SK-N-SH (cell line): ENCODE measurements at regions of chr18 and their contacts with region 1.

Region 1: DNA sequence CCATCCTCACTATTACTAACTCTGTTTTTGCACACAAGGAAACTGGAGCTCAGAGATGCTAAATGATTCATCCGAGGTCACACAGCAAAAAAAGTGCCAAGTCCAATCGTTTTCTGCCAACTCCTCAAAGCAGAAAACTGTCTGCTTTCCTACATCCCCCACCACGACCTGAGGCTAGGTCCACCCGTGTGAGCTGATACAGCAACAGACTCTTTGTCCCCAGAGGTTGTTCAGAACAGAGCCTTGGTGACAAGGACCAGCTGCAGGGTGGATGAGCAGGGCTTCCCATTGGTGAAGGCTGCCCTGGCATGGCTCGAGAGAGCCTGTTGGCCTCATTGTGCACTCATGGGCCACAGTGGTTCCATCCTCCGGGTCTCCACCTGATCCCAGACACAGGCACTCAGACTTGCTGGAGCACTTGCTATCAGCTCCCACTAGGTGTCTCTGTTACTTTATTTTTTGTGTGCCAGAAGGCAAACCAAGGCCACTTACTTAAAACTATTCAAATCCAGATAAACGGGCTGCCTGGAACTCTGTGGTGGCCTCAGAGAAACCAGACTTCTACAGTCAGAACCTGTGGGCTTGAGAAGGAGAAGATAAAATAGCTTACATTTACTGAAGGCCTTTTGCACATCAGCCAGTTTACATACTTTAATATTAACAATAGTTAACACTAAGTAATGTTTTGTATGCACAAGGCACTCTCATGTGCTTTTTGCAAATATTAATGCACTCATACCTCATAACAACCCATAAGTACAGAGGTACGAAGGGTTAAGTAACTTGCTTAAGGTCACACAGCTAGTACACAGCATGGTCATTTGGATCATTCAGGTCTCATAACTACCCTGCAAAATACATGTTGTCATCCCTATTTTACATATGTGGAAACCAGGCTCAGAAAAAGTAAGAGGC is 62.9 kb upstream of the CTIF start:
- DNase-seq: peak; percentile 73
- H3K4me3 ChIP-seq: no peak overlapping the region
- H3K27ac ChIP-seq: no peak overlapping the region
- H3K4me1 ChIP-seq: peaks cover 0 to 3% of the 10 kb centered on the region in 2 experiments; a peak in 1 of 4 replicates
- H3K27me3 ChIP-seq: no peaks in the 10 kb centered on the region
- CTCF ChIP-seq: peak; percentile 89
- EP300 ChIP-seq: no peak
- RAD21 ChIP-seq: peak; percentile 98

Region 2: GRCh38 chr18:48460929-48461583 is 14.8 kb before region 1 on chr18:
- CTCF ChIA-PET with region 1: interaction called, 13 read pairs
- POLR2A ChIA-PET with region 1: no interaction called
- DNase-seq: no peak
- H3K4me3 ChIP-seq: no peak overlapping the region
- H3K27ac ChIP-seq: no peak overlapping the region
- H3K4me1 ChIP-seq: peaks cover 0 to 10% of the 10 kb centered on the region in 2 experiments; a peak in 2 of 4 replicates
- H3K27me3 ChIP-seq: no peaks in the 10 kb centered on the region
- CTCF ChIP-seq: no peak
- EP300 ChIP-seq: no peak
- RAD21 ChIP-seq: no peak

Region 3: GRCh38 chr18:48493434-48494230 is 17.7 kb after region 1 on chr18:
- CTCF ChIA-PET with region 1: interaction called, 28 read pairs
- POLR2A ChIA-PET with region 1: no interaction called
- DNase-seq: no peak
- H3K4me3 ChIP-seq: no peak overlapping the region; a peak in 1 of 4 replicates
- H3K27ac ChIP-seq: no peak overlapping the region
- H3K4me1 ChIP-seq: no peaks in the 10 kb centered on the region; a peak in 1 of 4 replicates
- H3K27me3 ChIP-seq: no peaks in the 10 kb centered on the region
- CTCF ChIP-seq: no peak
- EP300 ChIP-seq: no peak
- RAD21 ChIP-seq: no peak

Region 4: GRCh38 chr18:48675352-48675761 is 199.5 kb after region 1 on chr18:
- CTCF ChIA-PET with region 1: interaction called, 174 read pairs
- POLR2A ChIA-PET with region 1: no interaction called
- DNase-seq: peak; percentile 90
- H3K4me3 ChIP-seq: no peak overlapping the region; a peak in 1 of 4 replicates
- H3K27ac ChIP-seq: peak overlapping the region in 1 of 2 experiments; percentile 39; a peak in 1 of 4 replicates
- H3K4me1 ChIP-seq: peaks cover 7 to 19% of the 10 kb centered on the region in 2 experiments; a peak in 2 of 4 replicates
- H3K27me3 ChIP-seq: no peaks in the 10 kb centered on the region
- CTCF ChIP-seq: peak; percentile 87
- EP300 ChIP-seq: no peak
- RAD21 ChIP-seq: peak; percentile 96